Panc1 (cell line): ENCODE measurements at regions of chr10 and their contacts with region 1.

Region 1: DNA sequence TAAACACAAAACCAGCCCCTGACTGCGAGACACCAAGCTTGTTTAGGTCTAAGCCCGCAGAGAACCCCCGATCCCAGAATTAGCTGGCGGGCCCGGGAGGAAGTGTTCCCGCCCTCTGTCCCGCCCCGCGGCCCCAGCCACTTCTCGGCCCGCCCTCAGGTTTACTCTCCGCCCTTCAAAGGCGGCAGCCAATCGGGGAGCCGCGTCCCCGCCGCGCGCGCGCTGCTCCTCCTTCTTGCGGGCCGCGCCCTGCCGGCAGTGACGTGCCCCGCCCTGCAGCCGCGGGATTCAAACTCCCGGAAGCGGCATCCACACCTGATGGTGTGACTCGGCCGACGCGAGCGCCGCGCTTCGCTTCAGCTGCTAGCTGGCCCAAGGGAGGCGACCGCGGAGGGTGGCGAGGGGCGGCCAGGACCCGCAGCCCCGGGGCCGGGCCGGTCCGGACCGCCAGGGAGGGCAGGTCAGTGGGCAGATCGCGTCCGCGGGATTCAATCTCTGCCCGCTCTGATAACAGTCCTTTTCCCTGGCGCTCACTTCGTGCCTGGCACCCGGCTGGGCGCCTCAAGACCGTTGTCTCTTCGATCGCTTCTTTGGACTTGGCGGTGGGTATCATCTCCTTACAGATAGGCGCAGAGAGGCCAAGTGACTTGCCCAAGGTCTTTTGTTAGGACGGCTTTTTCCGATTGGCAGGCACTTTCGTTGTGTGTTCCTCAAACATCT is at the start of gene CEP55:
- DNase-seq: no peak
- ATAC-seq: peak; percentile 98
- H3K4me3 ChIP-seq: peak within 1 kb of the TSS; percentile 84 to 93
- H3K27ac ChIP-seq: peak within 1 kb of the TSS; percentile 96
- H3K4me1 ChIP-seq: peaks cover 23% of the 10 kb centered on the region
- H3K27me3 ChIP-seq: no peaks in the 10 kb centered on the region
- CTCF ChIP-seq: no peak
- total RNA-seq, gene CEP55: 96.4 TPM

Region 2: DNA sequence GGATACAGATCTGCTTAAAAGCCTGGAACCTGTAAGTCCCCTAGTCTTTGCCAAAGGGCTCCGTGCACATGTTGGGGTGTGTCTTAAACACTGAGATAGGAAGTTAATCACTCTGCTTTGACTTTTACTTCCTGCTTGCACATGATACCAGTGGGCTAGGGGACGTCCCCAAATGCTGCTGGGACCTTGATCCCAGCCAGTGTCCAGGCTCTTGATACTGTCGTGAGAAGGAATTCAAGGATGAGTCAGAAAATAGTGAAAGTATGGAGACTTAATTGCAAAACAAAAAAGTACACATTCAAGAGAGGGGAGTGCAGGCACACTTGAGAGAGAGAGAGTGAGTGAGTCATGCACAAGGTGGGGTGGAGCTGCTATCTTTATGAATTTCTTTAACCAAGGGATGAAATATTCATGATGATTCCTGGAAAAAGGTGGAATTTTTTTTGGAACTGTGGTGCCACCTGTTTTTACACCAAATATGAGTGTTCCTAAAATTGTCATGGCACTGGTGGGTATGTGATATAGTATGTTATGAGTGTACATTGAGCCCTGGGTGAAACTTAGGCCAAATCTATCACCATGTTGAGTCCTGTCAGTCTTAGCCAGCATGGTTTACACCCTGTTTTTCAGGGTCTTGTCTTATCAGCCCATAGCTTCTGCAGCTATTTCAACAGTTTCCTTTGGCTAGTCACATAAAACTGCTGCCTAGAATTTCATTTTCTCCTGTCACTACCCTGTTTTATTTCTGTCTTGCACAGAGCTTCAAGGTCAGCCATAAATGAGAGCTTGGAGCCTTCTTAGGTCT is 524.2 kb before region 1 on chr10:
- CTCF ChIA-PET with region 1: no interaction called
- POLR2A ChIA-PET with region 1: interaction called, 12 read pairs
- in situ Hi-C with region 1: no loop called
- intact Hi-C with region 1: no loop called
- DNase-seq: peak; percentile 12
- ATAC-seq: no peak
- H3K4me3 ChIP-seq: no peak overlapping the region
- H3K27ac ChIP-seq: no peak overlapping the region
- H3K4me1 ChIP-seq: no peaks in the 10 kb centered on the region
- H3K27me3 ChIP-seq: no peaks in the 10 kb centered on the region
- CTCF ChIP-seq: no peak

Region 3: GRCh38 chr10:93566435-93567276 is 70.2 kb after region 1 on chr10 and contains the start of gene FFAR4:
- CTCF ChIA-PET with region 1: no interaction called
- POLR2A ChIA-PET with region 1: no interaction called
- in situ Hi-C with region 1: no loop called
- intact Hi-C with region 1: no loop called
- DNase-seq: no peak
- ATAC-seq: peak; percentile 76
- H3K4me3 ChIP-seq: peak within 1 kb of the TSS; percentile 39 to 55
- H3K27ac ChIP-seq: no peak within 1 kb of the TSS
- H3K4me1 ChIP-seq: peaks cover 10% of the 10 kb centered on the region
- H3K27me3 ChIP-seq: peaks cover 34% of the 10 kb centered on the region
- CTCF ChIP-seq: no peak
- total RNA-seq, gene FFAR4: 0.92 TPM

Region 4: DNA sequence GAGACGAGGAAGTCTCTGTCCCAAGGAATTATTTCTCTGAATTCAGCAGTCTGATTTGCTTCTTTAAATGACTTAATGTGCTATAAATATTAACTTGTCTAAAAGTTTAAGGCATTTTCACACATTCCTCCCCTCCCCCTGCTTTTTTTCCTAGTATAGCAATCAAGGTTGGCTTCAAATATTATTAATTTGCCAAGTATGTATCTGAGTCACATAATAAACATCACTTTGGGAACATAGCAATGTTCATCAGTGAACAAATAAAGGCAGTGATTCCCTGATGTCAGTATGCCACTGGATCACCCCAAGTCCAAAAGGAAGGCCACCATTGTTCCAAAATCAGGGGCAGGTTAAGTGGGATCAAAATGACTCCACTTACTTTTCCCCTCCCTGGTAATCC is 156.4 kb after region 1 on chr10:
- CTCF ChIA-PET with region 1: no interaction called
- POLR2A ChIA-PET with region 1: interaction called, 16 read pairs
- in situ Hi-C with region 1: no loop called
- intact Hi-C with region 1: no loop called
- DNase-seq: peak; percentile 74
- ATAC-seq: no peak
- H3K4me3 ChIP-seq: no peak overlapping the region
- H3K27ac ChIP-seq: no peak overlapping the region
- H3K4me1 ChIP-seq: no peaks in the 10 kb centered on the region; the same call in 1 of the 2 replicates
- H3K27me3 ChIP-seq: no peaks in the 10 kb centered on the region
- CTCF ChIP-seq: no peak